Mammary epithelial cell (primary cell): ENCODE measurements at regions of chr7 and their contacts with region 1.

Region 1: GRCh38 chr7:105700793-105701192 is 119.5 kb upstream of the EFCAB10 start:
- DNase-seq: no peak
- H3K4me3 ChIP-seq: no peak overlapping the region
- H3K27ac ChIP-seq: no peak overlapping the region
- H3K4me1 ChIP-seq: no peaks in the 10 kb centered on the region
- H3K27me3 ChIP-seq: no peaks in the 10 kb centered on the region
- CTCF ChIP-seq: no peak

Region 2: DNA sequence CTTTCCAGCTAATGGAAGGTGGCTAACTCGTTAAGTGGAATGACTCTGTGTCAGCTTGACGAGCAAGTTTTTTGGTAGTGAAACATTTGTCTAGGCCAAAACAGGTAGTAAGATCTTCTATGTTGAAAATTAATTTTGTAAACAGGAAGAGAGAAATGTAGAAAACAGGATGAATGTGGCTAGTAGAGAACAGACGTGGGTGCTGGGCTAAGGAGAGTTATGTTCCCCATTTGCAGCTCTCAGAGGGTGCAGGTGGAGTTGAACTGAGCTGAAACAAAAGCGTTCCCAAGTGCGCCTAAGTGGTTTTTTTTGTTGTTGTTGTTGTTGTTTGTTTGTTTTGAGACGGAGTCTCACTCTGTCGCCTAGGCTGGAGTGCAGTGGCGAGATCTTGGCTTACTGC is 252.6 kb before region 1 on chr7:
- CTCF ChIA-PET with region 1: interaction called, 28 read pairs
- dilution Hi-C with region 1: no loop called
- in situ Hi-C with region 1: no loop called
- intact Hi-C with region 1: no loop called
- DNase-seq: no peak
- H3K4me3 ChIP-seq: no peak overlapping the region
- H3K27ac ChIP-seq: no peak overlapping the region
- H3K4me1 ChIP-seq: no peaks in the 10 kb centered on the region
- H3K27me3 ChIP-seq: no peaks in the 10 kb centered on the region
- CTCF ChIP-seq: no peak